ENCODE measurements at regions of chr2 and their contacts with region 1.

Region 1: DNA sequence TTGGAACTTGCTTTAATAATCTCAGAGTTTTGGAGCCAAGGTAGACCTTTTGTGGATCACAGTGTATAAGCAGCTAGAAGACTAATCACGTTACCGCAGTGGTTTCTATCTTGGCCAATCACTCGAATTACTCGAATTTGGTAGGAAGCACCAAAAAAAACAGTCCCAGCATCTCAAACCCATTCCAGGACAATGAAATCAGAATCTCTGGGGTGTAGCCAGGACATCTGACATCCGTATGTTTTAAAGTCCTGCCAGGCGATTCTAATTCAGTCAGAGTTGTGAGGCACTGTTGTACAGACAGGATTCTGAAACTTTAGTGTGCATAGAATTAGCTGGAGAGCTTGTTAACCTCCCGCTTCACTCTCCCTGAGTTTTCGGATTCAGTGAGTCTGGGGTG is 30.8 kb downstream of the GRHL1 start:
- DNase-seq: no peak
- H3K4me3 ChIP-seq: no peak overlapping the region
- H3K27ac ChIP-seq: peak overlapping the region in 1 of 4 donors; percentile 41
- H3K4me1 ChIP-seq: peaks cover 18 to 34% (median 26%) of the 10 kb centered on the region in 4 donors
- H3K27me3 ChIP-seq: no peaks in the 10 kb centered on the region
- CTCF ChIP-seq: no peak
- EP300 ChIP-seq: no peak
- POLR2A ChIP-seq: no peak

Region 2: GRCh38 chr2:9844576-9844975 is 137.7 kb before region 1 on chr2:
- intact Hi-C with region 1: no loop called
- DNase-seq: no peak
- H3K4me3 ChIP-seq: peak overlapping the region; percentile 77 to 96 (median 80)
- H3K27ac ChIP-seq: no peak overlapping the region
- H3K4me1 ChIP-seq: peaks cover 9 to 25% (median 17%) of the 10 kb centered on the region in 4 donors
- H3K27me3 ChIP-seq: no peaks in the 10 kb centered on the region
- CTCF ChIP-seq: no peak
- EP300 ChIP-seq: no peak
- POLR2A ChIP-seq: no peak

Region 3: GRCh38 chr2:10039633-10040410 is 57.6 kb after region 1 on chr2:
- intact Hi-C with region 1: loop called (anchors 2 kb)
- DNase-seq: no peak
- H3K4me3 ChIP-seq: no peak overlapping the region
- H3K27ac ChIP-seq: peak overlapping the region; percentile 28 to 98 (median 95)
- H3K4me1 ChIP-seq: peaks cover 75 to 84% (median 81%) of the 10 kb centered on the region in 4 donors
- H3K27me3 ChIP-seq: no peaks in the 10 kb centered on the region
- CTCF ChIP-seq: peak in 1 of 3 experiments; percentile 6
- EP300 ChIP-seq: no peak
- POLR2A ChIP-seq: no peak

Region 4: DNA sequence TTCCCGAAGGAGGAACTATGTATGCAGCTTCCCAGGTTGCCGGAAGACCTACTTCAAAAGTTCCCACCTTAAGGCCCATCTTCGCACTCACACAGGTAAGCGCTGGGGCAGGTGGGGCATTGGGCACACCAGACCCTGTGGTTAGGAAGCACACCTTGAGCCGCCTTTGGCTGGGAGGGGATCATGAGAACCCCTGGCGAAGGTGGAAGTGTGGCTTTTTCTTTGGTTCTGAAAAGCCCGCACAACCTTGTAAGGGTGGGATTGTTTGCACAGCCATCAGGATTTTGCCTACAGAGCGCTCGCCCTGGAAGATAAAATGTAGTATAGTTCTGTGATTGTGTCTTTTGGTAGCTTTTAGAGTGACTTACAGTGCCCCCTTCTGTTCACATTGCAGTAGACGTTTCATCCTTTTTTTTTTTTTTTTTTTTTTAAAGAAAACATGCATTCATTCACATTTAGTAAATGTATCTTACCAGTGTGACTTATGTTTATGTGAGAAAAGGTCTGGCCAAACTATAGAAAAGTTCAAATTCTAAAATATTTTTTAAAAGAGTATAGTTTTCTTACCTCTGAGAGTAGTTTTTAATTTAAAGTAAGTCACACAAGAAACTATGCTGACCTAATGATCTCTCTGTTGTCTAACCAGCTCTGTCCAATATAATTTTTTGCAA is 66.4 kb after region 1 on chr2:
- intact Hi-C with region 1: loop called (anchors 2 kb)
- DNase-seq: no peak
- H3K4me3 ChIP-seq: no peak overlapping the region
- H3K27ac ChIP-seq: peak overlapping the region in 3 of 4 donors; percentile 96 to 99 (median 98)
- H3K4me1 ChIP-seq: peaks cover 66 to 77% (median 72%) of the 10 kb centered on the region in 4 donors
- H3K27me3 ChIP-seq: no peaks in the 10 kb centered on the region
- CTCF ChIP-seq: peak; percentile 58 to 68 (median 66)
- EP300 ChIP-seq: no peak
- POLR2A ChIP-seq: no peak

Measured in esophagus muscularis mucosa (tissue), 4 donors.